ENCODE measurements at regions of chr2 and their contacts with region 1.

Region 1: GRCh38 chr2:70301344-70302194 is at the start of gene FAM136A:
- DNase-seq: peak; percentile 93
- ATAC-seq: peak; percentile 79
- H3K4me3 Mint-ChIP-seq: peak within 1 kb of the TSS; percentile 91
- H3K27ac Mint-ChIP-seq: peak within 1 kb of the TSS; percentile 94
- H3K4me1 Mint-ChIP-seq: peaks cover 35% of the 10 kb centered on the region
- H3K27me3 Mint-ChIP-seq: no peaks in the 10 kb centered on the region
- total RNA-seq, gene FAM136A: 45.0 to 52.8 TPM

Region 2: DNA sequence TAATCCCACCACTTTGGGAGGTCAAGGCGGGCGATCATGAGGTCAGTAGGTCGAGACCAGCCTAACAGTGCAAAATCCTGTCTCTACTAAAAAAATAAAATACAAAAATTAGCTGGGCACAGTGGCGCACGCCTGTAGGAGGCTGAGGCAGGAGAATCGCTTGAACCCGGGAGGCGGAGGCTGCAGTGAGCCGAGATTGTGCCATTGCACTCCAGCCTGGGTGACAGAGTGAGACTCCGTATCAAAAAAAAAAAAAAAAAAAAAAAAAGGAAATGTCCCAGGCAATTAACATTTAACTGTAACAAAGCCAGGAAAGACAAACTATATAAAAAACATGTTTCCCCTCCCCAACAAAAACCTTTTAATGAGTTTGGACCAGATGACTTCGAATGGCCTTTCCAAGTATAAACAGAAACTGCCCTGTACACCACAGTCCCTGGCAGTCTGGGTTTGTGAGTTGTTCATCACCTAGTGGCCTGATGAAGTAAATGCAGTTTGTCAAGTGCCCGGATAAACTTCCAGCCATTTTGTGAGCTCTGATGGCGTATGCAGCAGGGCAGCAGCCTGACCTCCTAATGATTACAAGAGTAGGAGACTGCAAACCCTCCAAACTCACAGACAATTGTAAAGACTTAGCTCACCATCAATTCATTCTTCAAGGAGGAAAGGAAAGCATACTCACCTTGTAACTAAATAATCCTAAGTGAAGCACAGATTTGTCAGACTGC is 230.9 kb before region 1 on chr2:
- CTCF ChIA-PET with region 1: no interaction called
- POLR2A ChIA-PET with region 1: no interaction called
- intact Hi-C with region 1: loop called in 1 of 2 experiments (anchors 5 kb)
- DNase-seq: peak; percentile 73
- ATAC-seq: peak; percentile 60
- H3K4me3 Mint-ChIP-seq: peak overlapping the region; percentile 48
- H3K27ac Mint-ChIP-seq: peak overlapping the region; percentile 94
- H3K4me1 Mint-ChIP-seq: peaks cover 51% of the 10 kb centered on the region
- H3K27me3 Mint-ChIP-seq: no peaks in the 10 kb centered on the region

Region 3: GRCh38 chr2:70258532-70258874 is 43.1 kb before region 1 on chr2:
- CTCF ChIA-PET with region 1: interaction called, 11 read pairs
- POLR2A ChIA-PET with region 1: interaction called, 3 read pairs
- intact Hi-C with region 1: no loop called
- DNase-seq: no peak
- ATAC-seq: no peak
- H3K4me3 Mint-ChIP-seq: peak overlapping the region; percentile 80
- H3K27ac Mint-ChIP-seq: no peak overlapping the region
- H3K4me1 Mint-ChIP-seq: peaks cover 31% of the 10 kb centered on the region
- H3K27me3 Mint-ChIP-seq: no peaks in the 10 kb centered on the region

Region 4: DNA sequence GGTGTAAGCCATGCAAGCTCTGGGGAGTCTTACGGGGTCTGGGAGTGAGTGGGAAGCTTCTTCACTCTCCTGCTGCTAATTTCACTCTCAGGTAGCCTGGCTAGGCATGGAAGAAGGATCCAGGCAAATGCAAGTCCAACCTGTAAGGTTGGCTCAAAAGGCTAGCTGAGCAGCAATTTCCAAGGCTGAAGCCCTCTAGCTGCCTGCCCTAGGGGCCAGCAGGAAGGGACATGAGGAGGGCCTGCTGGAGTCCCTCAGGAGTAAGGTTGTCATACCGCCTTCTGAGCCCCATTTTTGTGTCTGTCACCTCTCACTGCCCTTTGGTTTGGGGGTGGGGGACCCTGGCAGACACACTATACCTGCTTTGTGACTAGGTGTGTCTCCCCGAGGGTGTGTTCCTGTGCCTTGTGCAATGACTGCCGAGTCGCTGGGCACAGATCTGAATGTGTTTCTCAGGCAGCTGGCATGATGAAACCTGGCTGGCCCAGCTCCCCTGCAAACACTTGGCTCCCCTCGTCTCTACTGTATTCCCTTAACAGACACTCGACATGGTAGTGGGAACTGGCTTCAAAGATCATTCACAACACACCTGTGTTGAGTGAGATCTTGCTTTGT is 124.2 kb after region 1 on chr2:
- CTCF ChIA-PET with region 1: no interaction called
- POLR2A ChIA-PET with region 1: no interaction called
- intact Hi-C with region 1: no loop called
- DNase-seq: no peak
- ATAC-seq: no peak
- H3K4me3 Mint-ChIP-seq: no peak overlapping the region
- H3K27ac Mint-ChIP-seq: no peak overlapping the region
- H3K4me1 Mint-ChIP-seq: no peaks in the 10 kb centered on the region
- H3K27me3 Mint-ChIP-seq: no peaks in the 10 kb centered on the region

Region 5: DNA sequence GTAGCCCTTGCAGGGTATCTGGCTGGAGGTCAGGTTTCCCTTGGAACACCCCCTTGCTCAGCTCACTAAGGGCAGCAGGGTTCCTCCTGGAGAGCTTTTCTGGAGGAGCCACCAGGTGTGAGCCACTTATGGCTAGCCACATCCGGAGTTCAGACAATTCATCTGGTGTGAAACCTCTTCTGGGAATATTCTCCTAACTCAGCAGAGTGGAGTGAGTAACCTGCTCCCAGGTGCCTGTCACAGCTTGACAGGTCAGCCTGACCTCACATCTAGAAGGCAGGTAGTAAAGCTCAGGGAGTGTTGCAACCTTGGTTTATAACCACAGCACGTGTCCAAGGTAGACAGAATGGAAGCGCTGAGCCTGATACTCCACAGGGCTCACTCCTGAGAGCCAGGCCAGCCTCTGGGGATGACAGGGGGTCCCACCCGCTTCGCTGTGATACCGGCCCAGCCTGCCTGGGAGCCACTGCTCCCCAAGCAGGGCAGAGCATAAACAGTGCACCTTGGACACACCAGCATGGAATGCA is 314.7 kb after region 1 on chr2:
- CTCF ChIA-PET with region 1: interaction called, 90 read pairs
- POLR2A ChIA-PET with region 1: no interaction called
- intact Hi-C with region 1: loop called (anchors 1 kb)
- DNase-seq: no peak
- ATAC-seq: no peak
- H3K4me3 Mint-ChIP-seq: no peak overlapping the region
- H3K27ac Mint-ChIP-seq: no peak overlapping the region
- H3K4me1 Mint-ChIP-seq: no peaks in the 10 kb centered on the region
- H3K27me3 Mint-ChIP-seq: peaks cover 2% of the 10 kb centered on the region

Region 6: GRCh38 chr2:70767699-70768589 is 466.4 kb after region 1 on chr2 and contains the start of gene ADD2:
- CTCF ChIA-PET with region 1: interaction called, 3 read pairs
- POLR2A ChIA-PET with region 1: no interaction called
- intact Hi-C with region 1: loop called in 1 of 2 experiments (anchors 5 kb)
- DNase-seq: peak; percentile 85
- ATAC-seq: peak; percentile 90
- H3K4me3 Mint-ChIP-seq: peak within 1 kb of the TSS; percentile 84
- H3K27ac Mint-ChIP-seq: peak within 1 kb of the TSS; percentile 88
- H3K4me1 Mint-ChIP-seq: peaks cover 18% of the 10 kb centered on the region
- H3K27me3 Mint-ChIP-seq: peaks cover 26% of the 10 kb centered on the region
- total RNA-seq, gene ADD2: 26.9 to 31.5 TPM

Region 7: DNA sequence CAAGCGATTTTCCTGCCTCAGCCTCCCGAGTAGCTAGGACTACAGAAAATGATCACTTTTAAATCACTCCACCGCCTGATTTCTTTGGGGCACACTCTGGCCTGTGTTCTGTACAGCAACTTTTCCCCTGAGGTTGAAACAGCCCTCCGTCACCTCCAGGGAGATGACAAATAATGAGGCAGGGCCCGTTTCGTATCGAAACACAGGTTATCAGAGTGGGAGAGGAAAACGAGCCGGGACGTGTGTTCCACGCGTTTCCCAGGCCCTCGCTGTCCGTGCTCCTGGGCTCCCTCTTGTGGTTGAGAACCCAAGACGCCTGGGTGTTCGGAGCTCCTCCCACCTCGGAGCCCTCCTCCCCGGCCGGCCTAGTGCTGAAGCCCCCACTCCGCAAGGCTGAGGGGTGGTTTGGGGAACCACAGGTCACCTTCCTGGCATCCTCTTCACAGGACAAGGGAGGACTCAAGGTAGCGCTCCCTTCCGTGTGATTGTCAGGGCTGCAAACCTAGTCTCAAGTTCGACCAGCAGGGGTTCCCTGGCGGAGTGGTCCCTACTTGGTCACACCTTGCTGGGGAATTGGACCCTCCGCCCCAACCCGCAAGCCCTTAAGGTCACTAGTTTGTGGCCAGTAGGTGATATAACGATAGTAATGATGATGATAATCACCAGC is 646.9 kb after region 1 on chr2:
- CTCF ChIA-PET with region 1: interaction called, 4 read pairs
- POLR2A ChIA-PET with region 1: no interaction called
- intact Hi-C with region 1: loop called (anchors 1 to 2 kb)
- DNase-seq: peak; percentile 89
- ATAC-seq: peak; percentile 94
- H3K4me3 Mint-ChIP-seq: peak overlapping the region; percentile 64
- H3K27ac Mint-ChIP-seq: peak overlapping the region; percentile 20
- H3K4me1 Mint-ChIP-seq: peaks cover 17% of the 10 kb centered on the region
- H3K27me3 Mint-ChIP-seq: peaks cover 13% of the 10 kb centered on the region